IMR-90 (cell line): ENCODE measurements at regions of chr4 and their contacts with region 1.

Region 1: GRCh38 chr4:48079972-48080391 is 54.1 kb downstream of the TXK start:
- DNase-seq: no peak
- ATAC-seq: no peak
- H3K4me3 ChIP-seq: no peak overlapping the region
- H3K27ac ChIP-seq: no peak overlapping the region
- H3K4me1 ChIP-seq: no peaks in the 10 kb centered on the region
- H3K27me3 ChIP-seq: no peaks in the 10 kb centered on the region; the same call in none of the 2 replicates
- CTCF ChIP-seq: no peak
- POLR2A ChIP-seq: no peak
- RAD21 ChIP-seq: no peak

Region 2: DNA sequence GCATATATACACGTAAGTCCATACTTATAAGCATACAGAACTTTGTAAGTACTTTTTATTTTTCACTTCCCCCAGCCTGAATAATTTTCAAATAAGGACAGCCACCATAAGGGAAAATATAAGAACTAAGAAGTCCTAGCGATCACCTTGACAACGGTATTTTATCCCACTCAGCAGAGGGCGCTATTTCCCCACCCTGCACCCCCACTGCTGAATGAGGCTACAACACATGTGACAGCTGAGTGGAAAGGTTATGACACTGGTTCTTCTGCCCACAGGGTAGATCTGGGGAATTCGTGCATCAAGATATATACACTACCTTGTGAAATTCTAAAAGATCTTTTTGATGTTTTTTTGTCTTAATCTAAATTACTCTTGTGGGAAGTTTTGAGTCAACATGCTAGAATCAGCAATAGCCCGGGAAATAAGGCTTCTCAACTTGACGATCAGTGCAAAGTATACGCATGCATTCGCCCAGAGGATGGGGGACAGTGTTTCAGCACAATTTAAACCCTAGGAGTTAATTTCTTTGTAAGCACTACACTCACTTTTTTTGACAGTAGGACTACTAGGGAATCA is 393.6 kb before region 1 on chr4:
- CTCF ChIA-PET with region 1: no interaction called
- POLR2A ChIA-PET with region 1: no interaction called
- dilution Hi-C with region 1: no loop called
- in situ Hi-C with region 1: loop called (anchors 10 kb)
- intact Hi-C with region 1: no loop called
- DNase-seq: peak; percentile 38
- ATAC-seq: peak; percentile 69
- H3K4me3 ChIP-seq: no peak overlapping the region
- H3K27ac ChIP-seq: no peak overlapping the region
- H3K4me1 ChIP-seq: no peaks in the 10 kb centered on the region
- H3K27me3 ChIP-seq: peaks cover 10% of the 10 kb centered on the region
- CTCF ChIP-seq: peak; percentile 71
- POLR2A ChIP-seq: no peak
- RAD21 ChIP-seq: peak; percentile 68

Region 3: GRCh38 chr4:48038666-48039065 is 41.3 kb before region 1 on chr4:
- CTCF ChIA-PET with region 1: no interaction called
- POLR2A ChIA-PET with region 1: no interaction called
- dilution Hi-C with region 1: no loop called
- in situ Hi-C with region 1: no loop called
- intact Hi-C with region 1: loop called (anchors 5 kb)
- DNase-seq: no peak
- ATAC-seq: no peak
- H3K4me3 ChIP-seq: no peak overlapping the region
- H3K27ac ChIP-seq: no peak overlapping the region
- H3K4me1 ChIP-seq: no peaks in the 10 kb centered on the region
- H3K27me3 ChIP-seq: no peaks in the 10 kb centered on the region; the same call in 1 of the 2 replicates
- CTCF ChIP-seq: no peak
- POLR2A ChIP-seq: no peak
- RAD21 ChIP-seq: no peak

Region 4: GRCh38 chr4:48162162-48162561 is 82.2 kb after region 1 on chr4:
- CTCF ChIA-PET with region 1: no interaction called
- POLR2A ChIA-PET with region 1: no interaction called
- dilution Hi-C with region 1: no loop called
- in situ Hi-C with region 1: no loop called
- intact Hi-C with region 1: no loop called
- DNase-seq: peak; percentile 35
- ATAC-seq: peak; percentile 65
- H3K4me3 ChIP-seq: no peak overlapping the region
- H3K27ac ChIP-seq: no peak overlapping the region
- H3K4me1 ChIP-seq: peaks cover 3% of the 10 kb centered on the region; the same call in 1 of the 2 replicates
- H3K27me3 ChIP-seq: no peaks in the 10 kb centered on the region
- CTCF ChIP-seq: no peak
- POLR2A ChIP-seq: no peak
- RAD21 ChIP-seq: no peak

Region 5: DNA sequence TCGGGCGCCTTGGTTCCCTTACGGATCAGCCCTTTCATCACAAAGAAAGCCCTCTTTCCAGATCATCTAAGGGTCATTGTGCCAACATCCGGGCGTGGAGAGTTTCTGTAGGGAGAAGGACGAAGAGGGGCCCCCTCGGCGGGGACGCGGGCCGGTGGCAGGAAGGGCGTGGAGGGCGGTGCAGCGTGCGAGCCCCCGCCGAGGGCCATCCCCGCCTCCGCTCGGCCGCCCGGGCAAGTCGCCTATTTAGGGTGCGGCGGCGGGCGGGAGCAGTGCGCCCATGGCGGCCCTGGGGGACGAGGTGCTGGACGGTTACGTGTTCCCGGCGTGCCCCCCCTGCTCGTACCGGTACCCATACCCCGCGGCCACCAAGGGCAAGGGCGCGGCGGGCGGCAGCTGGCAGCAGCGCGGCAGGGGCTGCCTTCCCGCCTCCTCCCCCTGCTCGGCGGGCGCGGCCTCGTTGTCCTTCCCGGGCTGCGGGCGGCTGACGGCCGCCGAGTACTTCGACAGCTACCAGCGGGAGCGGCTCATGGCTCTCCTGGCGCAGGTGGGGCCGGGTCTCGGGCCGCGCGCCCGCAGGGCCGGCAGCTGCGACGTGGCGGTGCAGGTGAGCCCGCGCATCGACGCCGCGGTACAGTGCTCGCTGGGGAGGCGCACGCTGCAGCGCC is 410.2 kb after region 1 on chr4 and contains the start of gene ZAR1:
- CTCF ChIA-PET with region 1: no interaction called
- POLR2A ChIA-PET with region 1: no interaction called
- dilution Hi-C with region 1: no loop called
- in situ Hi-C with region 1: no loop called
- intact Hi-C with region 1: no loop called
- DNase-seq: no peak
- ATAC-seq: peak; percentile 24
- H3K4me3 ChIP-seq: peak within 1 kb of the TSS; percentile 27
- H3K27ac ChIP-seq: no peak within 1 kb of the TSS
- H3K4me1 ChIP-seq: no peaks in the 10 kb centered on the region
- H3K27me3 ChIP-seq: peaks cover 56% of the 10 kb centered on the region
- CTCF ChIP-seq: no peak
- POLR2A ChIP-seq: no peak
- RAD21 ChIP-seq: no peak
- total RNA-seq, gene ZAR1: not detected in 2 replicates